ENCODE measurements at regions of chr9 and their contacts with region 1.

Region 1: GRCh38 chr9:119898316-119898715 is 529.1 kb upstream of the BRINP1 start:
- DNase-seq: no peak
- ATAC-seq: no peak

Region 2: DNA sequence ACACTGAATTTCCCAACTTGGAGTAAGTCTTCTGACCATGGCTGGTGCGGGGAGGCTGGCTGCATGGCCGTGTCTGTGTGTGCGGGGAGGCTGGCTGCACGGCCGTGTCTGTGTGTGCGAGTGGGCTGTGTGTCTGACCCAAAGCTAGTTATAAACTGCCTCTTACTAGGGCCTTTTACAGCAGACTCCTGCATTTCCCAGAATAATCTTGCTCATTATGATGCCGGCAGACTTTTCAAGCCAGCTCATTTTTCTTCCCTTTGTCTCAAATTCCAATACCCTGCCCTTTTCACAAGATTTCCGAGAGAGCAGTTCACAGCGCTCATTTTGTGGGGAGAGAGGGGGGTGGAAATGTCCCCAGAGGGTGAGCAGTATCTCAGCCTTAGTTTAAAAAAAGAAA is 58.4 kb before region 1 on chr9:
- intact Hi-C with region 1: loop called in 1 of 2 experiments (anchors 10 kb)
- DNase-seq: no peak
- ATAC-seq: peak; percentile 25 to 72